Activated CD4-positive, alpha-beta T cell treated with anti-CD3 and anti-CD28 coated beads for 36 hours (primary cell): ENCODE measurements at regions of chr9 and their contacts with region 1.

Region 1: GRCh38 chr9:131253891-131254491 is 22.3 kb downstream of the FAM78A start:
- DNase-seq: no peak
- ATAC-seq: no peak
- H3K4me3 Mint-ChIP-seq: peak overlapping the region; percentile 76
- H3K27ac Mint-ChIP-seq: peak overlapping the region; percentile 92
- H3K4me1 Mint-ChIP-seq: peaks cover 48% of the 10 kb centered on the region
- H3K27me3 Mint-ChIP-seq: no peaks in the 10 kb centered on the region

Region 2: DNA sequence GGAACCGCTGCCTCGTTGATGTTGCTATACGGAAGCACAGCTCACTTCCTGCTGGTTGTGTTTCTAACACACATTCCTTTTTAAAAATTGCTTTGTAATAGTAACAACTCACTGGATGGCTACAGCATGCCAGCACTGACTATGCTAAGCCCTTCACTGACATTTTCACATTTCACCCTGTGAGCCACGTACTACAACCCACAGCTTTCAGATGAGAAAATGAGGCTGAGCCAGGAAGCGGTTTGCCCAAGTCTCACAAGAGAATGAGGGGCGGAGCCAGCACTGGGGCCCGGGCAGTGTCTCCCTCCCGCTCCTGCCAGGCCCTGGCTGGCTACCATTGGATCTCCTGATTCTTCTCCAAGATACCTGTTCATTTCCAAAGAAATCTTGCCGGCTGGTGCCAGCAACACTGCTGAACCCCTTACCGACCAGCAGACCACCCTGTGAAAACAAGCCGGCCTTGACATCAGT is 16.0 kb before region 1 on chr9:
- CTCF ChIA-PET with region 1: interaction called, 8 read pairs
- POLR2A ChIA-PET with region 1: interaction called, 5 read pairs
- intact Hi-C with region 1: loop called (anchors 1 kb)
- DNase-seq: peak; percentile 94
- ATAC-seq: peak; percentile 97
- H3K4me3 Mint-ChIP-seq: peak overlapping the region; percentile 56
- H3K27ac Mint-ChIP-seq: peak overlapping the region; percentile 95
- H3K4me1 Mint-ChIP-seq: peaks cover 45% of the 10 kb centered on the region
- H3K27me3 Mint-ChIP-seq: no peaks in the 10 kb centered on the region

Region 3: GRCh38 chr9:131270171-131271015 is 16.4 kb after region 1 on chr9:
- CTCF ChIA-PET with region 1: interaction called, 14 read pairs
- POLR2A ChIA-PET with region 1: interaction called, 20 read pairs
- intact Hi-C with region 1: loop called (anchors 1 kb)
- DNase-seq: peak; percentile 77
- ATAC-seq: peak; percentile 13
- H3K4me3 Mint-ChIP-seq: peak overlapping the region; percentile 90
- H3K27ac Mint-ChIP-seq: peak overlapping the region; percentile 100
- H3K4me1 Mint-ChIP-seq: peaks cover 58% of the 10 kb centered on the region
- H3K27me3 Mint-ChIP-seq: no peaks in the 10 kb centered on the region

Region 4: GRCh38 chr9:131277910-131278701 is 24.1 kb after region 1 on chr9:
- CTCF ChIA-PET with region 1: interaction called, 4 read pairs
- POLR2A ChIA-PET with region 1: interaction called, 20 read pairs
- intact Hi-C with region 1: loop called (anchors 1 to 2 kb)
- DNase-seq: peak; percentile 88
- ATAC-seq: peak; percentile 55
- H3K4me3 Mint-ChIP-seq: peak overlapping the region; percentile 75
- H3K27ac Mint-ChIP-seq: peak overlapping the region; percentile 71
- H3K4me1 Mint-ChIP-seq: peaks cover 22% of the 10 kb centered on the region
- H3K27me3 Mint-ChIP-seq: peaks cover 7% of the 10 kb centered on the region